ENCODE measurements at regions of chr12 and their contacts with region 1.

Region 1: GRCh38 chr12:53746592-53747092 is 5.1 kb downstream of the CISTR start:
- DNase-seq: peak; percentile 84 to 92 (median 87)
- H3K4me3 ChIP-seq: no peak overlapping the region
- H3K27ac ChIP-seq: no peak overlapping the region
- H3K4me1 ChIP-seq: peaks cover 0 to 25% (median 21%) of the 10 kb centered on the region in 4 experiments
- H3K27me3 ChIP-seq: peaks cover 16 to 95% (median 41%) of the 10 kb centered on the region in 5 experiments

Region 2: DNA sequence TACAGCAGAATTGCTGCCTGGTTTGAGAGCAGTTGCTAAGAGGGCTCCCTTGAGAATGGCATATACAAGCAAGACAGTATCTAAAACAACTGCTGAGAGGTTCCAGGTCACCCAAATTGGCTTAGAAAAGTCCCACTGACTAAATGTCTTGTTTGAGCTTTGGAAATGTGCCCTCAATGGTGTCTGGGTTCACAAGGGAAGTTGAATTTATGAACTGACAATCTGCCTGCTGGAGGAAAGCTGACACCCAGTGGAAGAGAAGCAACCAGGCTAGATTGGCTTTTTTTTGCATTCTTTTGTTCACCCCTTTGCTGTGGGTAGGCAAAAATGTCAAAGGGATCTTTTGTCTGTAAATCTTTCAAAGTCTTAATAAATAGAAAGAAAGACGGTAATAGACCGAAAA is 194.8 kb before region 1 on chr12:
- CTCF ChIA-PET with region 1: interaction called, 12 read pairs
- POLR2A ChIA-PET with region 1: no interaction called
- DNase-seq: no peak
- H3K4me3 ChIP-seq: no peak overlapping the region
- H3K27ac ChIP-seq: no peak overlapping the region
- H3K4me1 ChIP-seq: no peaks in the 10 kb centered on the region
- H3K27me3 ChIP-seq: no peaks in the 10 kb centered on the region

Region 3: DNA sequence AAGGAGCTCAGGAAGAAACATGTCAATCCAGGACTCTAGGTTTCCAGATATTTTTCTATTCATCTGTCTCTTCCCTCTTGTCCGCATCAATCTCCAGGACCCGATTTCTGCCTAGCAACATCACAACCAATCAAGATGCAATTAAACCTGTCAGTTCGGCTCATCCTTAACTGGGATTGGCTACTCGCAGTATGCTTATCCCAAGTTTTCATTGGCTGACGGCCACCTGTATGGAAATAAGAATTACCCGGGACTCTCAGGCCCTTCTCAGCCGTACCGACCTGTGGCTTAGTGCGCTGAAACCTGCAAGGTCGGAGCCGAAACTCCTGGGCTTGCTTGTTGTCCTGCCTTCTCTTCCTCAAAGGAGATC is 50.4 kb before region 1 on chr12:
- CTCF ChIA-PET with region 1: interaction called, 124 read pairs
- POLR2A ChIA-PET with region 1: interaction called, 4 read pairs
- DNase-seq: peak in 2 of 3 donors; percentile 18 to 30
- H3K4me3 ChIP-seq: peak overlapping the region in 3 of 7 experiments; percentile 4 to 68 (median 54)
- H3K27ac ChIP-seq: no peak overlapping the region
- H3K4me1 ChIP-seq: peaks cover 0 to 27% (median 15%) of the 10 kb centered on the region in 4 experiments
- H3K27me3 ChIP-seq: peaks cover 36 to 95% (median 49%) of the 10 kb centered on the region in 5 experiments

Region 4: GRCh38 chr12:53713541-53713940 is 33.1 kb before region 1 on chr12:
- CTCF ChIA-PET with region 1: interaction called, 184 read pairs
- POLR2A ChIA-PET with region 1: no interaction called
- DNase-seq: no peak
- H3K4me3 ChIP-seq: no peak overlapping the region
- H3K27ac ChIP-seq: no peak overlapping the region
- H3K4me1 ChIP-seq: no peaks in the 10 kb centered on the region
- H3K27me3 ChIP-seq: peaks cover 0 to 6% (median 1%) of the 10 kb centered on the region in 5 experiments

Region 5: DNA sequence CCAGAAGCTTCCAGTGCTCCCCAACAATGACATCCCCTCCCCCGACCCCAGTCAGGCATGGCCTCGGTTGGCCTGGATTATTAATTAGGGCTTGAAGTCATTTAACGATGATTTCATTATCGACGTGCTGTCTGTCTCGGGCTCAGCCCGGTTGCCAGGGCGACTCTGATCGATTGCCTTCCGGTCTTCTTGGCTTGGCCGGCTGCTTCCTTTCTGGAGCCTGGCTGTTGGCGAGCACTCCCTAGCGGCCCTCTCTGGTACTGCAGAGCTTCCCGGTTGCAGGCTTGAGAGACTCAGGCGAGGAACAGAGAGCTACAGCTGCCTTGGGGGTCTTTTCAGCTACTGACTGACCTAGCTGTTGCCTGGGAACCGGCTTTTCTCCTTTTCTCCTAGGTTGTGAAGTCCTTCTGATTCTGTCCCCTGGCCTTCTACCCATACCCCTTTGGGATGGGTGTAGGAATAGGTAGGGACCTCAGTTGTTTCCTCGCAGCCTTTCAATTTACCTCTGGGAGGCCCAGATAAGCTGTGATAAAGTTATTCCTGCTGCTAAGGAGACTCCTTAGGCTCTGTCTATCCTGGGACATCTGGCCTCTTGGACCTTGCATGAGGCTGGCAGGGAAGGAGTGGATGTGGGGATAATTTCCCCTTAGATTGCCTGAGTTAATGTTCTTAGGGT is 10.6 kb after region 1 on chr12:
- CTCF ChIA-PET with region 1: interaction called, 113 read pairs
- POLR2A ChIA-PET with region 1: interaction called, 3 read pairs
- DNase-seq: peak; percentile 71 to 82 (median 79)
- H3K4me3 ChIP-seq: peak overlapping the region in 2 of 7 experiments; percentile 48 to 50
- H3K27ac ChIP-seq: no peak overlapping the region
- H3K4me1 ChIP-seq: peaks cover 1 to 64% (median 28%) of the 10 kb centered on the region in 4 experiments
- H3K27me3 ChIP-seq: peaks cover 6 to 82% (median 25%) of the 10 kb centered on the region in 5 experiments

Region 6: GRCh38 chr12:53907103-53907502 is 160.5 kb after region 1 on chr12:
- CTCF ChIA-PET with region 1: no interaction called
- POLR2A ChIA-PET with region 1: no interaction called
- DNase-seq: no peak
- H3K4me3 ChIP-seq: no peak overlapping the region
- H3K27ac ChIP-seq: no peak overlapping the region
- H3K4me1 ChIP-seq: no peaks in the 10 kb centered on the region
- H3K27me3 ChIP-seq: peaks cover 3 to 68% (median 27%) of the 10 kb centered on the region in 5 experiments

Measured in common myeloid progenitor, CD34-positive (primary cell).